ENCODE measurements at regions of chr12 and their contacts with region 1.

Region 1: GRCh38 chr12:103548622-103549601 is 38.2 kb upstream of the STAB2 start:
- DNase-seq: peak; percentile 55 to 83 (median 69)
- H3K4me3 ChIP-seq: no peak overlapping the region
- H3K27ac ChIP-seq: no peak overlapping the region
- H3K4me1 ChIP-seq: no peaks in the 10 kb centered on the region
- H3K27me3 ChIP-seq: peaks cover 4% of the 10 kb centered on the region
- CTCF ChIP-seq: peak; percentile 66 to 86 (median 80)
- POLR2A ChIP-seq: no peak

Region 2: GRCh38 chr12:102885043-102885932 is 663.6 kb before region 1 on chr12:
- intact Hi-C with region 1: loop called in 1 of 2 experiments (anchors 5 kb)
- DNase-seq: no peak
- H3K4me3 ChIP-seq: no peak overlapping the region
- H3K27ac ChIP-seq: no peak overlapping the region
- H3K4me1 ChIP-seq: no peaks in the 10 kb centered on the region
- H3K27me3 ChIP-seq: peaks cover 7% of the 10 kb centered on the region
- CTCF ChIP-seq: no peak
- POLR2A ChIP-seq: no peak

Region 3: DNA sequence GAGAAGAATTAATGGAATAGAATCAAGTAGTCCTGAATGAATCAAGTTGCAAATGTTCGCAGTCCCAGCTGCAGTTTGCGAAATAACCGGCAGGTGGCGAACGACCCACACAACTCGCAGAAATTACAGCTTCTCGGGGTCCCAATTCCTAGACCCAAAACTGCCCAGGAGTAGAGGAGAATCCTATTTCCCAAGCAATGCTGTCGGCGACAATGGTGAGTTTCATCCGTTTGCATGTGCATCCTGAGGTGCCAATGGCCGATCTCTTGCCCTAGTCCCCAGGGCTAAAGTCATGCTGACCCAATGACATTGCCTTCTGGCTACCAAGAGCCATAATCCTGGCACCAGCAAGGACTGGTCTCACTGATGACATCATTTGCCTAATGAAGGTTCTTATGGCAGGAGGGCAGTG is 600.0 kb before region 1 on chr12:
- intact Hi-C with region 1: loop called (anchors 2 to 5 kb)
- DNase-seq: peak in 6 of 7 donors; percentile 32 to 79 (median 58)
- H3K4me3 ChIP-seq: no peak overlapping the region
- H3K27ac ChIP-seq: no peak overlapping the region
- H3K4me1 ChIP-seq: no peaks in the 10 kb centered on the region
- H3K27me3 ChIP-seq: peaks cover 17% of the 10 kb centered on the region
- CTCF ChIP-seq: peak; percentile 70 to 95 (median 84)
- POLR2A ChIP-seq: no peak